A549 (cell line): ENCODE measurements at regions of chr11 and their contacts with region 1.

Region 1: DNA sequence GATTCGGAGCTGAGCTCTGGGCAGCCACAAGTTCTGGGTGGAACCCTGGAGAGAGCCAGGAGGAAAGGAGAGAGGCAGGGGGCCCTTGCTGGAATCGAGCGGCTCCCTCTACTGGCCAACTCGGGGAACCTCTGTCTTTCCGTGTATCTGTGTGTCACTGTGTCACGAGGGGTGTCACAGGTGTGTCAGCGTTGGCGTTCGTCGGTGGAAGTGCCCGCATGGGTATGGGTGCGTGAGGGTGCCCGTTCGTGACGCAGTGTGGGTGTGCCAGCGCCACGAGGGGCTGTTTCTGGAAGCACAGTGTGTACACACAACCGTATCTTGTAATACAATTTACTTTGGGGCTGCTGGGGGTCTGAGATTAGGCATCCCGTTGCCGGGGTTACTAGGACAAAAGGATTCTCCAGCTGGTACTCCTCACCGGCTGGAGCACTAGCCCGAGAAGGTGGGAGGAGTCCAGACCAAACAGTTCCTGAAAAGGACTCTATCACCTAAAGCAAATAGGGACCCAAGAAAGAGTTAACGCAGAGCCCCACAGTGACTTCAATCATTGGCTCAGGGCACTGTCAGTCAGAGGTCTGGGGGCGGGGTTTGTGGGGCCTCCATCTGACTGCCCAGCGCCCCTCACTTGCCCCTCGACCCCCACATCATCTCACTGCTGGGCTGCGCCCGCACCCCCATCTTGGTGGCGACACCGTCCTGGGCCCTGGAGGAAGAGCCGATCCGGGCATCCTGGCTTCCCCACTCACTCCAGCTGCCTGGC is 2.6 kb upstream of the BCL9L start:
- DNase-seq: peak; percentile 91 to 93
- ATAC-seq: peak; percentile 65 to 78
- H3K4me3 ChIP-seq: peak overlapping the region; percentile 94
- H3K27ac ChIP-seq: peak overlapping the region; percentile 98 to 100
- H3K4me1 ChIP-seq: peaks cover 27% of the 10 kb centered on the region
- CTCF ChIP-seq: peak; percentile 74
- EP300 ChIP-seq: peak in 1 of 2 experiments; percentile 38; a peak in 1 of 5 replicates
- POLR2A ChIP-seq: no peak
- RAD21 ChIP-seq: peak; percentile 79 to 83

Region 2: GRCh38 chr11:118791111-118791965 is 137.0 kb before region 1 on chr11 and contains the start of gene DDX6:
- CTCF ChIA-PET with region 1: interaction called, 17 read pairs
- POLR2A ChIA-PET with region 1: interaction called, 7 read pairs
- DNase-seq: peak; percentile 62 to 81
- ATAC-seq: peak; percentile 79 to 81
- H3K4me3 ChIP-seq: peak within 1 kb of the TSS; percentile 69
- H3K27ac ChIP-seq: peak within 1 kb of the TSS; percentile 100
- H3K4me1 ChIP-seq: peaks cover 23% of the 10 kb centered on the region
- CTCF ChIP-seq: no peak; the same call in 2 of the 3 replicates
- EP300 ChIP-seq: no peak
- POLR2A ChIP-seq: peak; percentile 62
- RAD21 ChIP-seq: peak in 1 of 2 experiments; percentile 14; a peak in 1 of 5 replicates
- polyA plus RNA-seq, gene DDX6: 41.4 and 43.8 TPM in 2 replicates

Region 3: DNA sequence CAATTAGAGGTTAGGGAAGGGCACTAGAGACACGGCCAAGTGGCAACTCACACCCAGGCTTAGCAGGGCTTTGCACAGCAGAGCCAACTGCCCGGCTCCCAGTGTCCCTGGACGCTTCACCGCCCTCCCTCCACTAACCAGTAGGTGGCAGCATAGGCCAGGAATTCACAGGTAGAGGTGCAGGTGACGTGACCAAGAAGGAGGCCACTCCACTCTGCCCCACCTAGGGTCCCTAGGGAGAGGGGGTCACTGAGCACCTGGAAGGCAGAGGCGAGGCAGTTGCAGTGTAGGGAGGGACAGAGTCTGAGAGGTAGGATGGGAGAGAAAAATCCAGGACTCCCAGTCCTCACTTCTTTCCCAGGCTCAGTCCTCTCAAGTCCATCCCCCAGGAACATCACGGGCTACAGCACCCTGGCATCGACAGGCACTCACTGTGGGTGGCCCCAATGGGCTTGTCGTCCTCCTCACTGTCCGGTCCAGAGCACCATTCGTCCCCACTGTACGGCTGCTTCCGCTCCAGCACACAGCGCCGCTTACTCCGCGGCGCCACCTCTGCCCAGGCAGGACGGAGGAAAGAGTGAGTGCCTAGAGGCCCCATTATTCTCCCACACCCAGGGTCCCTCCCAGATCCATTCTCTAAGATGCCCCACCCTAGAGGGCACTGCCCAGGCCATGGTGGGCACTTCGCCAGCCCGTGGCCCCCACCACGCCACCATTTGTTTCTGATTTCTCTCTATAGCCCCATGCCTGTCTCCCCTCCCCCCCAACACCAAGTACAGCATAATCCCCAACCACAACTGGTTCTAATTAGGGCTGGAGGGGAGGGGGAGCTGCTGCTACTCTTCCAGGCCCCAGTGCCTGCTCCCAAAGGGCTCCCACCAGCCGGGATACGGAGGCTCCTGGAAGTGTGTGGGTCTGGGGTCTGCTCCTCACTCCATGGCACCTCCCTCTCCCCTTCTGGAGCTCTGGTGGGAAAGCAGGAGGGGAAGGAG is 20.9 kb before region 1 on chr11:
- CTCF ChIA-PET with region 1: no interaction called
- POLR2A ChIA-PET with region 1: interaction called, 53 read pairs
- DNase-seq: peak; percentile 47 to 82
- ATAC-seq: peak; percentile 22 to 46; a peak in 5 of 6 replicates
- H3K4me3 ChIP-seq: peak overlapping the region; percentile 52; the same call in 2 of the 3 replicates
- H3K27ac ChIP-seq: peak overlapping the region; percentile 98 to 100
- H3K4me1 ChIP-seq: peaks cover 60% of the 10 kb centered on the region
- CTCF ChIP-seq: peak; percentile 72
- EP300 ChIP-seq: no peak
- POLR2A ChIP-seq: no peak
- RAD21 ChIP-seq: peak; percentile 90 to 92

Region 4: GRCh38 chr11:118939953-118940598 is 11.8 kb after region 1 on chr11:
- CTCF ChIA-PET with region 1: interaction called, 21 read pairs
- POLR2A ChIA-PET with region 1: no interaction called
- DNase-seq: no peak
- ATAC-seq: peak; percentile 43 to 58; a peak in 5 of 6 replicates
- H3K4me3 ChIP-seq: no peak overlapping the region
- H3K27ac ChIP-seq: peak overlapping the region in 1 of 2 experiments; percentile 33; a peak in 1 of 6 replicates
- H3K4me1 ChIP-seq: peaks cover 10% of the 10 kb centered on the region
- CTCF ChIP-seq: no peak
- EP300 ChIP-seq: no peak
- POLR2A ChIP-seq: no peak
- RAD21 ChIP-seq: no peak

Region 5: DNA sequence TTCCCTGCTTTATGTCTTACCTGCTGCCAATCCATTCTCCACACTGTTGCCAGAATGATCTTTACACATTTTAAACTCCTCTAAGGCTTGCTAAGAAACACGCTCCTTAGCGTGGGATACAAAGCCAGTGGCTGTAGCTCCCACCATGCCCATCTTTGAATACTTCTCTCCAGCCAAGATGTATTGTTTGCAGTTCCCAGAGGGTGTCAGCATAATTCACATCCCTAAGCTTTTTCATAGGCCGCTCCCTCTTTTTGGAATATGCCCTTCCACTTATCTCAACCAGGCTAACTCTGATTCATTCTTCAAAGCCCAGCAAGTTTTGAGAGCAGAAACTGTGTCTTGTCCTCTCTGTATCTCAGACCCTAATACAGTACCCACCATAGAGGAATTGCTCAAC is 19.7 kb after region 1 on chr11:
- CTCF ChIA-PET with region 1: interaction called, 21 read pairs
- POLR2A ChIA-PET with region 1: no interaction called
- DNase-seq: peak in 1 of 2 experiments; percentile 28
- ATAC-seq: peak in 1 of 2 experiments; percentile 72; a peak in 4 of 6 replicates
- H3K4me3 ChIP-seq: no peak overlapping the region
- H3K27ac ChIP-seq: no peak overlapping the region
- H3K4me1 ChIP-seq: 0 out of 3 replicates have a peak, but pooled peaks cover 8% of the 10 kb centered on the region
- CTCF ChIP-seq: no peak
- EP300 ChIP-seq: no peak
- POLR2A ChIP-seq: no peak
- RAD21 ChIP-seq: no peak

Region 6: GRCh38 chr11:118956094-118956846 is 28.0 kb after region 1 on chr11 and contains the start of gene UPK2:
- CTCF ChIA-PET with region 1: interaction called, 55 read pairs
- POLR2A ChIA-PET with region 1: no interaction called
- DNase-seq: peak; percentile 73 to 89
- ATAC-seq: peak; percentile 94 to 99
- H3K4me3 ChIP-seq: no peak within 1 kb of the TSS
- H3K27ac ChIP-seq: peak within 1 kb of the TSS; percentile 27 to 65; a peak in 2 of 6 replicates
- H3K4me1 ChIP-seq: peaks cover 4% of the 10 kb centered on the region; the same call in 1 of the 3 replicates
- CTCF ChIP-seq: peak; percentile 72
- EP300 ChIP-seq: no peak
- POLR2A ChIP-seq: no peak
- RAD21 ChIP-seq: peak; percentile 95 to 97
- polyA plus RNA-seq, gene UPK2: 0.20 and 0.37 TPM in 2 replicates

Region 7: DNA sequence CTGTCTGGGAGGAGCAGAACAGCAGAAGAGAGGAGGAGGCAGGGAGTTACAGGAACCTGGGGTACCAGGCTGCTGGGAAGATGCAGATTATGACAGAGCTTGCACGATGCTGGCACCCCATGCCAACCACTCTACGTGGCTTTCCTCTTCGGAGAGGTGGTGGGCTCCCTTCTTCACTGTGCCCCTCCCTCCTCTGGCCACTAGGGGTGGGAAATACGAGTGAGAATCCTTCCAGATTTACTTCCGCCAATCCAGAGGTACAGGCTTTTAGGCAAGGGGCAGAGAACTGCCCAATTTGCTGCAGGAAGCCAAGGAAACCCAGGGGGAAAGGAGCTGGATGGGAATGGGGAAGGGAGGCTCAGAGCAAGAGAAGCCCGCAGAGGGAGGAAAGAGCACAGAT is 116.4 kb after region 1 on chr11:
- CTCF ChIA-PET with region 1: no interaction called
- POLR2A ChIA-PET with region 1: no interaction called
- DNase-seq: no peak
- ATAC-seq: peak; percentile 44 to 54; a peak in 3 of 6 replicates
- H3K4me3 ChIP-seq: no peak overlapping the region
- H3K27ac ChIP-seq: no peak overlapping the region
- H3K4me1 ChIP-seq: no peaks in the 10 kb centered on the region
- CTCF ChIP-seq: no peak
- EP300 ChIP-seq: no peak
- POLR2A ChIP-seq: no peak
- RAD21 ChIP-seq: no peak